GM12878 (cell line): ENCODE measurements at regions of chr1 and their contacts with region 1.

Region 1: DNA sequence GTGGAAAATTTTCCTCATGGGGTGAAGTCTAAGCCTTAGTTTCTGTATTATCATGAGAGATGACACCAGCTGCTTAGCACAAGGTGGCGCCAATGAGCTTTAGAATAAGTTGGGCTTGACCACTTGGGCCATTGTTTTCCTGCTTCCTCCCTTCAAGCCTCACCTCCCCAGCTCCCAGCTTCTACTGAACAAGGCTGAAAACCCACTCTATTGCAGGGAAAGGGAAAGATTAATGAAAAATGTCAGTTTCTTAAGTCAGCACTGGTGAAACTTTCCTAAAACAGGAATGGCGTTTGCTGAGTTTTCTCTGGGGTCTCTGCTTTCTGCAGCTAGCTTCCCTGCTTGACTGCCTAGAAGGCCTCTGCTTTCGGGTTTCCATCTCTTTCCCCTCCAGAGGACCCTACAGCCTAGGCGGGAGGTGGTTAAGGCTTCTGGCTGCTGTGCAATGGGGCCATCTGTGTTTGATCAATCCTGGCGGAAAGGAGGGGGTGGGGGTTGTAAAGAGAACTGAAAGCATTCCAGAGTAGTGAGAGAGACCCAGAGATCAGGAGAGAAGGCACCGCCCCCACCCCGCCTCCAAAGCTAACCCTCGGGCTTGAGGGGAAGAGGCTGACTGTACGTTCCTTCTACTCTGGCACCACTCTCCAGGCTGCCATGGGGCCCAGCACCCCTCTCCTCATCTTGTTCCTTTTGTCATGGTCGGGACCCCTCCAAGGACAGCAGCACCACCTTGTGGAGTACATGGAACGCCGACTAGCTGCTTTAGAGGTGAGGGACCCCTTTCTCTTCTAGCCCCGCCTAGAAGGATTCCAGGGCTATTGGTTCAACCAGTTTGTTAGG is at the start of gene OLFML3:
- DNase-seq: peak; percentile 31
- ATAC-seq: peak; percentile 86
- H3K4me3 ChIP-seq: no peak within 1 kb of the TSS
- H3K27ac ChIP-seq: no peak within 1 kb of the TSS
- H3K4me1 ChIP-seq: peaks cover 3% of the 10 kb centered on the region; the same call in 1 of the 2 replicates
- H3K27me3 ChIP-seq: no peaks in the 10 kb centered on the region
- CTCF ChIP-seq: peak; percentile 72 to 80 (median 79)
- EP300 ChIP-seq: no peak
- POLR2A ChIP-seq: no peak
- RAD21 ChIP-seq: peak; percentile 80
- polyA plus RNA-seq, gene OLFML3: not detected

Region 2: DNA sequence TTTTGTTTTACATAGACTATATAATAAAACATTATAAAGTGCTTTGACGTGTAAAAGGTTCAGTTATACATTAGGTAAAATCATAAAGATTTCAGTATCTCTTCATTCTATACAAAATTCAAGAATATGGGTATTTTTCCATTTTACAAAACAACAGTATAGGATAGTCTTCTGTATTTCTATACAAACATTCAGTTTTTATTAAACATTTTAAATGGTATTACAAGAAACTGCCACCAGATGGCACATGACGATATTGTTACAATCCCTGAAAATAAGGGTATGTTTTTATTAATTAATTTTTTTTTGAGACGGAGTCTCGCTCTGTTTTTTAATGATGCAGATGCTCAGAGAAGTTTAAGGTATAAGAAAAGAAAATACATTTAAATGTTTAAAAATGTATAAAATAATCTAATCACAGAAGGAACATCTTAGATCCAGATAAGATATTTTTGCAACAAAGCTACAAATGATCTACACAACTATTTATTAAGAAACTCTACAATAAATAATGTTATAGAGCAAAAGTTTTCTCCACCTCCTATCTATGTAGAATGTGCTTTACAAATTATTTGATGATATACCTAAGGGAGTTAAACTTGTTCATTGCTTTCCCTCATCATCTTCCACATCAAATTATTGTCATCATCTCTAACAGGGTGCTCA is 143.3 kb before region 1 on chr1:
- CTCF ChIA-PET with region 1: interaction called, 36 read pairs
- POLR2A ChIA-PET with region 1: no interaction called
- RAD21 ChIA-PET with region 1: interaction called, 15 read pairs
- SMC1A ChIA-PET with region 1: interaction called, 8 read pairs
- in situ Hi-C with region 1: no loop called
- intact Hi-C with region 1: loop called (anchors 5 kb)
- DNase-seq: no peak
- ATAC-seq: peak; percentile 45; the same call in 2 of the 3 replicates
- H3K4me3 ChIP-seq: no peak overlapping the region
- H3K27ac ChIP-seq: no peak overlapping the region
- H3K4me1 ChIP-seq: no peaks in the 10 kb centered on the region
- H3K27me3 ChIP-seq: no peaks in the 10 kb centered on the region
- CTCF ChIP-seq: peak; percentile 9 to 51 (median 25); a peak in 4 of 6 replicates
- EP300 ChIP-seq: no peak
- POLR2A ChIP-seq: no peak
- RAD21 ChIP-seq: peak; percentile 69

Region 3: DNA sequence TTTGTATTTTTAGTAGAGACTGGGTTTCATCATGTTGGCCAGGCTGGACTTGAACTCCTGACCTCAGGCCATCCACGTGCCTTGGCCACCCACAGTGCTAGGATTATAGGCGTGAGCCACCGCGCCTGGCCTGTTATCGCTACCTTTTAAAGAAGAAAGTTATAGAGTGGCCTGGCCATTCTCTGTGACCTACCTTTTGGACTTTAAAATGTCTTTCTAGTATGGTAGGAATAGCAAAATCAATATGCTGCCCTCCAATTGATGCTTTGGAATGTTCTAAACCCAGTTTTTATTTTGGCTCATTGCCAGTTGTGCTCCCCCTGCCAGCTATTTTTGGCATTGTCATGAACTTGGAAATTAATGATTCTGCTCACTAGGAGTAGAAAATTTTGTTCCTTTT is 30.1 kb before region 1 on chr1:
- CTCF ChIA-PET with region 1: interaction called, 6 read pairs
- POLR2A ChIA-PET with region 1: no interaction called
- RAD21 ChIA-PET with region 1: no interaction called
- SMC1A ChIA-PET with region 1: interaction called, 33 read pairs
- in situ Hi-C with region 1: no loop called
- intact Hi-C with region 1: no loop called
- DNase-seq: no peak
- ATAC-seq: no peak
- H3K4me3 ChIP-seq: no peak overlapping the region
- H3K27ac ChIP-seq: no peak overlapping the region
- H3K4me1 ChIP-seq: peaks cover 24% of the 10 kb centered on the region
- H3K27me3 ChIP-seq: no peaks in the 10 kb centered on the region
- CTCF ChIP-seq: 0 out of 6 replicates have a peak, but pooled peaks of 1 of the 3 experiments have one; percentile 10
- EP300 ChIP-seq: no peak
- POLR2A ChIP-seq: no peak
- RAD21 ChIP-seq: no peak

Region 4: GRCh38 chr1:114053604-114054003 is 74.5 kb after region 1 on chr1:
- CTCF ChIA-PET with region 1: no interaction called
- POLR2A ChIA-PET with region 1: no interaction called
- RAD21 ChIA-PET with region 1: no interaction called
- SMC1A ChIA-PET with region 1: no interaction called
- in situ Hi-C with region 1: no loop called
- intact Hi-C with region 1: no loop called
- DNase-seq: no peak
- ATAC-seq: no peak
- H3K4me3 ChIP-seq: no peak overlapping the region
- H3K27ac ChIP-seq: no peak overlapping the region
- H3K4me1 ChIP-seq: no peaks in the 10 kb centered on the region
- H3K27me3 ChIP-seq: no peaks in the 10 kb centered on the region; a peak in 1 of 4 replicates
- CTCF ChIP-seq: no peak
- EP300 ChIP-seq: no peak
- POLR2A ChIP-seq: no peak
- RAD21 ChIP-seq: no peak

Region 5: DNA sequence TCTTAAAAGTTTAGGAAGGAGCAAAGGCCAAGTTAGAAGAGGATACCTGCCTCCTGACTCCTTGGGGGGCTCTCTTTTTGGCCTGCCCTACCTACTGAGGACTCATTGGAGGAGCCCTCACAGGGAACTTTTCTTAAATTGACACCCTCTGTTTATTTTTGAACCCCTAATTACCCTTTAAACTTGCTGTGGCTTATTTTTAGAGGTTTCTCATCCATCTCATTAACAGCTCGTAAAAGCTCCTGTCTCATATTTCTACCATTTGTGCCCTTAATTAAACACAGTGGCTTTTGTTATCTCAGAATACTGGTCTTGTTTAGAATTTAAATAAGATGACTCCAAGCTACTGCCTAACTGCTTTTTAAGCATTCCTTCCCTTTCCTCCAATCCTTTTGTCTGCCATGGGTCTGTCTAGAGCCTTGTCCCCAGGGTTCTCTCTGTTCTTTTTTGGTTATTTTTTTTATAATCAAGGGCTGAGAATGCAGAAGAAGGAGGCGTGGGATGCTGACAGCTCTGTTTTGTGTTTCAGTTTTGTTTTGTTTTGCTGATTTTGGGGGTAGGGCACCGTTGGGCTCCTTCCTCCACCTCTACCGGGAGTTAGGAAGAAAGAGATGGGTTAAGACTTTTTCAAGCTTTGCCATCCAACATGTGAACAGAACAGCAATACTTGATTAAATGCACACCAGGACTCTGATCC is 96.6 kb after region 1 on chr1:
- CTCF ChIA-PET with region 1: interaction called, 10 read pairs
- POLR2A ChIA-PET with region 1: no interaction called
- RAD21 ChIA-PET with region 1: interaction called, 5 read pairs
- SMC1A ChIA-PET with region 1: interaction called, 3 read pairs
- in situ Hi-C with region 1: no loop called
- intact Hi-C with region 1: no loop called
- DNase-seq: peak; percentile 17
- ATAC-seq: peak; percentile 52
- H3K4me3 ChIP-seq: no peak overlapping the region
- H3K27ac ChIP-seq: no peak overlapping the region
- H3K4me1 ChIP-seq: peaks cover 9% of the 10 kb centered on the region; the same call in 1 of the 2 replicates
- H3K27me3 ChIP-seq: no peaks in the 10 kb centered on the region
- CTCF ChIP-seq: no peak
- EP300 ChIP-seq: no peak
- POLR2A ChIP-seq: no peak
- RAD21 ChIP-seq: no peak

Region 6: DNA sequence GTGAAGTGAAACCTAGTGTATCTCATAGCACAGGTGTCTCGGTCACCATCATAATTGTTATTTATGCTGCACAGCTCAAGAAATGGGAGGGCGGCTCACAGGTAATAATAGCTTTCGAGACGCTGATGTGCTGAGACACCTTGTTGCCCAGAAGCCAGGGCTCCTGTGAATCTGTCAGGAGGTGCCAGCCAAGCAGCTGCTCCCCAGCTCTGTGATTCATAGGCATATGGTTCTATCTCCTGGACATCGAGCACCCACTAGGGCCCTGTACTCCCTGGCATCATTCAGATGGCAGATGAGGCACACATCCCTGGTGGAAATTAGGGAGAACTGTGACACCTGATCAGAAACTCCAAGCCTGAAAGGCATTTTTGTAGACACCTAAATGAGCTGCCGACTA is 121.1 kb after region 1 on chr1:
- CTCF ChIA-PET with region 1: no interaction called
- POLR2A ChIA-PET with region 1: no interaction called
- RAD21 ChIA-PET with region 1: no interaction called
- SMC1A ChIA-PET with region 1: no interaction called
- in situ Hi-C with region 1: no loop called
- intact Hi-C with region 1: no loop called
- DNase-seq: no peak
- ATAC-seq: no peak
- H3K4me3 ChIP-seq: no peak overlapping the region
- H3K27ac ChIP-seq: no peak overlapping the region
- H3K4me1 ChIP-seq: no peaks in the 10 kb centered on the region
- H3K27me3 ChIP-seq: no peaks in the 10 kb centered on the region; a peak in 2 of 4 replicates
- CTCF ChIP-seq: no peak
- EP300 ChIP-seq: no peak
- POLR2A ChIP-seq: no peak
- RAD21 ChIP-seq: no peak

Region 7: DNA sequence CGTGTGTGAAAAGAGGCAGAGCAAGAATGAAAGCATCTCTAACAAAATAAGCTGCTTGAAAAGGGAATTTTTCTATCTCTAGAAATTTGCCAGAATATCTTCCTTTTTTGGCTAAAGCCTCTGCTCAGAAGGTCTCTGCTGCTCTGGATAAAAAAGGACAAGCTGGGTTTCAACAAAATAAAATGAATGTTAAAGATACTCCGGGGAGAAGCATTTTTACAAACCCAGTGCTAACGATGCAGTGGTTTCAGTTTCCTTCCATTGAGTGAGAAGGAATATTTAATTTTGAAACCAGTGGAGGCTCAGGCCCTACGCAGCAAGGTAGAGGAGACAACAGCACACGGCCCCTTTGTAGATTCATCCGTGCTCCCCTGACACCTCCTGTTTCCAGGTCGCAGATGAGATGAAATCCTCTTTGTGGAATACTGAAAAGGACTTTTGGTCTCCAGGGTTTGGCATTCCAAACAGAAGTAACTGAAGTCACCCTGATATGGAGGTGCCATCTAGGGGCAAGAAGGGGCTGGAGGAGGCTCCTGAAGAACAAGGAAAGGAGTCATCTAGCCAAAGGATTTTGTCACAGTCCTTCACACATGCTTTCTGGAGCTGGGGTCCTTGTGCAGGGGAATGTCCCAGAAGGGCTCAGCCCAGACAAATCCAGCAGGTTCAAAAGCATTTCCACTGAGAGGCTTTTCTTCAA is 240.2 kb after region 1 on chr1:
- CTCF ChIA-PET with region 1: interaction called, 3 read pairs
- POLR2A ChIA-PET with region 1: no interaction called
- RAD21 ChIA-PET with region 1: no interaction called
- SMC1A ChIA-PET with region 1: interaction called, 3 read pairs
- in situ Hi-C with region 1: no loop called
- intact Hi-C with region 1: loop called (anchors 5 kb)
- DNase-seq: no peak
- ATAC-seq: no peak
- H3K4me3 ChIP-seq: no peak overlapping the region
- H3K27ac ChIP-seq: no peak overlapping the region
- H3K4me1 ChIP-seq: no peaks in the 10 kb centered on the region
- H3K27me3 ChIP-seq: no peaks in the 10 kb centered on the region
- CTCF ChIP-seq: 0 out of 6 replicates have a peak, but pooled peaks of 1 of the 3 experiments have one; percentile 5
- EP300 ChIP-seq: no peak
- POLR2A ChIP-seq: no peak
- RAD21 ChIP-seq: no peak

Region 8: GRCh38 chr1:114282751-114283403 is 303.8 kb after region 1 on chr1:
- CTCF ChIA-PET with region 1: interaction called, 235 read pairs
- POLR2A ChIA-PET with region 1: no interaction called
- RAD21 ChIA-PET with region 1: interaction called, 96 read pairs
- SMC1A ChIA-PET with region 1: interaction called, 157 read pairs
- in situ Hi-C with region 1: loop called (anchors 5 kb)
- intact Hi-C with region 1: loop called (anchors 1 kb)
- DNase-seq: peak; percentile 36
- ATAC-seq: peak; percentile 100
- H3K4me3 ChIP-seq: no peak overlapping the region
- H3K27ac ChIP-seq: no peak overlapping the region
- H3K4me1 ChIP-seq: no peaks in the 10 kb centered on the region
- H3K27me3 ChIP-seq: no peaks in the 10 kb centered on the region; a peak in 1 of 4 replicates
- CTCF ChIP-seq: peak; percentile 80 to 89 (median 88)
- EP300 ChIP-seq: no peak
- POLR2A ChIP-seq: no peak
- RAD21 ChIP-seq: peak; percentile 88